Ovary (tissue), 10 donors: ENCODE measurements at regions of chr11 and their contacts with region 1.

Region 1: GRCh38 chr11:12052676-12053605 is 44.5 kb upstream of the DKK3 start:
- DNase-seq: no peak
- H3K4me3 ChIP-seq: no peak overlapping the region
- H3K27ac ChIP-seq: no peak overlapping the region
- H3K4me1 ChIP-seq: no peaks in the 10 kb centered on the region
- H3K27me3 ChIP-seq: no peaks in the 10 kb centered on the region
- CTCF ChIP-seq: no peak
- EP300 ChIP-seq: no peak
- POLR2A ChIP-seq: no peak

Region 2: GRCh38 chr11:11584446-11584810 is 468.5 kb before region 1 on chr11:
- intact Hi-C with region 1: no loop called
- DNase-seq: no peak
- H3K4me3 ChIP-seq: no peak overlapping the region
- H3K27ac ChIP-seq: no peak overlapping the region
- H3K4me1 ChIP-seq: no peaks in the 10 kb centered on the region
- H3K27me3 ChIP-seq: no peaks in the 10 kb centered on the region
- CTCF ChIP-seq: no peak
- EP300 ChIP-seq: no peak
- POLR2A ChIP-seq: no peak

Region 3: GRCh38 chr11:11731311-11732083 is 321.4 kb before region 1 on chr11:
- intact Hi-C with region 1: no loop called
- DNase-seq: peak in 1 of 5 donors; percentile 36
- H3K4me3 ChIP-seq: no peak overlapping the region
- H3K27ac ChIP-seq: no peak overlapping the region
- H3K4me1 ChIP-seq: no peaks in the 10 kb centered on the region
- H3K27me3 ChIP-seq: no peaks in the 10 kb centered on the region
- CTCF ChIP-seq: no peak
- EP300 ChIP-seq: no peak
- POLR2A ChIP-seq: no peak

Region 4: DNA sequence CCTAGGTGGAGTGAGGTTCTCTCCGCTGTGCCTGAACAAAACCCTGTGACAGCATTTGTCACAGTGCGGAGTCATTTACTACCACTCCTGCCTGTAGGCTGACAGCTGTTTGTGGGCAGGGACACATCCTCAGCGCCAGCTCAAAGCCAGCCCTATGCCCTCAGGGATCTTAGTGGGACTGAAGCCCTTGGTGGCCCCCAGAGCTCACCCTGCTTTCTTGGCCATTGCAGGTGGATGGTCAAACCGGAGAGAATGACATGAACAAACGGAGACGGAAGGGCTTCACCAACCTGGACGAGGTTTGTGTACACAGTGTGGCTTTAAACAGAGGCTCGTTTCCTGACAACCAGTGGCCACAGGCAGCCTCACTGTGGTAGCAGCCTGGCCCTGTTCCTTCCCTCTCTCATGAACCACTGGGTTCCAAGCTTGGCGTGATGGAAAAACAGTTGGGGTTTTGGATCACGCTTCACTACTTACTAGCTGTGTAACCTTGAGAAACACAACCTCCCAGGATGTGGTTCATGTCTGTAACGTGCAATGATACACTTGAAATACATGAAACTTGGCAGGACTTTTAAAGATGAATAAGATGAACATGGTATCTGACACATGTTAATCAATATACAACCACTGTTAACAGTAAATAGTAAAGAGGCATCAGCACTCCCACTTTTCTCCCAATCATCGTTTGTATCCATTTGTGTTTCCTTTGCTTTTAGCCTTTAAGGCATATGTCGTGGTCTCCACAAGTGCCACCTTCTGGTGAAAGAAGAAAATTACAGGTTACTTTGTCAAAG is 183.2 kb after region 1 on chr11:
- intact Hi-C with region 1: loop called in 3 of 4 experiments (anchors 5 to 10 kb)
- DNase-seq: peak in 2 of 5 donors; percentile 27 to 33
- H3K4me3 ChIP-seq: no peak overlapping the region
- H3K27ac ChIP-seq: peak overlapping the region; percentile 48 to 51
- H3K4me1 ChIP-seq: peaks cover 7% of the 10 kb centered on the region
- H3K27me3 ChIP-seq: no peaks in the 10 kb centered on the region
- CTCF ChIP-seq: peak; percentile 43 to 74 (median 73)
- EP300 ChIP-seq: no peak
- POLR2A ChIP-seq: no peak

Region 5: GRCh38 chr11:12248338-12248737 is 195.4 kb after region 1 on chr11:
- intact Hi-C with region 1: loop called in 1 of 4 experiments (anchors 10 kb)
- DNase-seq: peak; percentile 46 to 88 (median 72)
- H3K4me3 ChIP-seq: no peak overlapping the region
- H3K27ac ChIP-seq: no peak overlapping the region
- H3K4me1 ChIP-seq: peaks cover 3% of the 10 kb centered on the region
- H3K27me3 ChIP-seq: no peaks in the 10 kb centered on the region
- CTCF ChIP-seq: no peak
- EP300 ChIP-seq: no peak
- POLR2A ChIP-seq: no peak